Cardiac septum (tissue), 1 donor: ENCODE measurements at regions of chr15 and their contacts with region 1.

Region 1: DNA sequence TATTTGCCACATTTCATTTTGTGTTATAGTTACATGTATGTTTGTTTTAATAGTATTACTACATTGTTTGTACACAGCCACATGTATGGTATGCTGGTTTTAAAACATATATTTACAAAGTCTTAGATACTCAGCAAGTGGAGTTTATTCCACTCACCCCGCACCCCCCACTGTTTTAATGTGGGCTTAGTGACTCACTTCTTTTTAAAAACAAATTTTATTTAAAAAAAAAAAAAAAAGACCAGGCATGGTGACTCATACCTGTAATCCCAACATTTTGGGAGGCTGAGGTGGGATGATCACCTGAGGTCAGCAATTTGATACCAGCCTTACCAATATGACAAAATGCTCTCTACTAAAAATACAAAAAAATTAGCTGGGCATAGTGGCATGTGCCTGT is 26.9 kb upstream of the TJP1 start:
- DNase-seq: no peak

Region 2: DNA sequence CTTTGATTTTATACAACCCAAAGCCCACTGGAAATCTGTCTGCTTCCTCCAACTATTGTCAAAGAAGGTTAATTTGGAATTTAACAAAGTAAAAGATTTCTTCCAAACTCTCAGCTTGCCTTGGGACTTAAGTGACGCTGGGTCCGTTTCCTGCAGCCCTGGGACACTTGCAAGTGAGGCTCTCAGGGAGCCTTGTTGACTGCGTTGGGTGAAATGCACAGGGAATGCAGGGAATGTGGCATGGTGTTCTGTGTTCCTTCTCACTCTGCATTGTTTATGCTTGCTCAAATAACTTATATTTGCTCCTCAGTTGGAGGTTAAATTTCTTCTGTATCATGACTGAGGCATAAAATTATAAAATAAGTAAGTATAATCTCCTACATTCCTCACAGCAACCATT is 33.9 kb after region 1 on chr15:
- intact Hi-C with region 1: loop called (anchors 5 kb)
- DNase-seq: no peak